ENCODE measurements at regions of chr3 and their contacts with region 1.

Region 1: GRCh38 chr3:141192345-141192744 is 39.3 kb upstream of the PXYLP1 start:
- ATAC-seq: peak; percentile 93 to 100 (median 100)
- H3K4me3 ChIP-seq: no peak overlapping the region
- H3K27ac ChIP-seq: no peak overlapping the region
- H3K4me1 ChIP-seq: no peaks in the 10 kb centered on the region

Region 2: GRCh38 chr3:141000027-141000663 is 192.2 kb before region 1 on chr3:
- in situ Hi-C with region 1: loop called in 8 of 9 experiments (anchors 10 to 25 kb)
- ATAC-seq: peak; percentile 93 to 100 (median 98)
- H3K4me3 ChIP-seq: no peak overlapping the region
- H3K27ac ChIP-seq: no peak overlapping the region
- H3K4me1 ChIP-seq: no peaks in the 10 kb centered on the region

Region 3: DNA sequence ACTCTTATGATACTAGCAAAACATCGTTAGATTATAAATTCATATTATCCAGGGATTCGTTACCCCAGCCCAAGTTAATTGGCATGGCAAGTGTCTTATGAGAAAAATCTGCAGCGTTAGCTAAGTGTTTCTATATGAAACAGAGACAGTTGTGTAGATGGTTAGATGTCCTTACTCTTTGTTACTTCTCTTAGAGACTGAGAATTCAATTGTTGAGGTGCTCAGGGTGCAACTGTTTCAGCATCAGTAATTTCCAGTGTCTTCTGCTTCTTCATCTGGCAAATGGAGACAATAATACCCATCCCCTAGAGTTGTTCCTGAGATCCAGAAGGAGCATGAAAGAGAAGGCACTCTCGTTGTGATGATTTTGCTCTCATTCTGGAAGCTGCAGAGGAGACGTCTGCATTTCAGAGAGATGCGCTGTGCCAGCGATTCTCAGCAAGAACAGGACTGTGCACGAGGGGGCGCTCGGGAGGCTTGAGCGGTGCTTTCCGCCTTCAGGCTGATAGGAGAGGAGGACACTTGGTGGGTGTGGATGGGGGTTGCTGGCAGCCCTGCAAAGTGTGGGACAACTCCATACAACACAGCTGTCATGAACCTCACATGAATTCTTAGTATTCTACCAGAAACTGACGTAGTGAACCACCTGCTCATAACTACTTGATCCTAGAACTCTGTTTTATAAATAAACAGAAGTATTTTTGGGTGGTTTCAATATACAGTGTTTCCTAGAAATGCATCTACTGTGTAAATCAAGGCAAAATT is 180.9 kb before region 1 on chr3:
- in situ Hi-C with region 1: loop called in 8 of 9 experiments (anchors 10 to 25 kb)
- ATAC-seq: peak; percentile 82 to 100 (median 100)
- H3K4me3 ChIP-seq: no peak overlapping the region
- H3K27ac ChIP-seq: no peak overlapping the region
- H3K4me1 ChIP-seq: peaks cover 5 to 12% of the 10 kb centered on the region in 2 donors